Left ventricle myocardium superior (tissue), 1 donor: ENCODE measurements at regions of chr22 and their contacts with region 1.

Region 1: DNA sequence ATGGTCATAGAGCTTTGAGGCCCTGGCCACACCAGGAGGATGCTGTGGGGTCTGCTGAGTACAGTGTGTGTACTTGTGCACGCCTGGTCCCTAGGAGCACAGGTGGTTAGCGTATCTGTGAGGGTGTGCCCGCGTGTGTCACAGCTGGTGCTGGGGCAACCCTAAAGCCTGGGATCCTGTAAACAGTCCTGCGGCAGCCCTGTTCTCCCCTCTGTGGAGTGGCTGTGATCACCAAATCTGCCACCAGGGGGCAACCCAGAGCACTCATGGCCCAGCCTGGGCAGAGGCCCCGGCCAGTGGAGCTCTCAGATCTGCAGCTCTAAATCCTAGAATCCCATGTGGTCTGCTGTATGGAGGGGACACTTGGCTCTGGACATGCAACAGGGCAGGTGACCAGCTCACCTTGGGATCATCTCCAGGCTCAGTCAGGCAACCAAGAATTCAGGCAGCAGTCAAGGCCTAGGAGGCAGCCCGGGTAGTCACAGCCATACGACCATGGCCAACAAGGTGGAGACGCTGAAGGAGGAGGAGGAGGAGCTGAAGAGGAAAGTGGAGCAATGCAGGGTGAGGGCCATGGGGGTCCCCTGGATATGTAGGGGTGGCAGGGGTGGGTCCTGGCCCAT is 3.9 kb downstream of the SH3BP1 start:
- DNase-seq: peak; percentile 93
- ATAC-seq: peak; percentile 83

Region 2: GRCh38 chr22:37345863-37346504 is 297.4 kb before region 1 on chr22:
- intact Hi-C with region 1: no loop called
- DNase-seq: peak; percentile 49
- ATAC-seq: peak; percentile 72

Region 3: GRCh38 chr22:37696657-37697537 is 53.6 kb after region 1 on chr22 and contains the start of gene TRIOBP:
- intact Hi-C with region 1: loop called (anchors 10 kb)
- DNase-seq: peak; percentile 96
- ATAC-seq: peak; percentile 99
- total RNA-seq, gene TRIOBP: 82.7 TPM

Region 4: DNA sequence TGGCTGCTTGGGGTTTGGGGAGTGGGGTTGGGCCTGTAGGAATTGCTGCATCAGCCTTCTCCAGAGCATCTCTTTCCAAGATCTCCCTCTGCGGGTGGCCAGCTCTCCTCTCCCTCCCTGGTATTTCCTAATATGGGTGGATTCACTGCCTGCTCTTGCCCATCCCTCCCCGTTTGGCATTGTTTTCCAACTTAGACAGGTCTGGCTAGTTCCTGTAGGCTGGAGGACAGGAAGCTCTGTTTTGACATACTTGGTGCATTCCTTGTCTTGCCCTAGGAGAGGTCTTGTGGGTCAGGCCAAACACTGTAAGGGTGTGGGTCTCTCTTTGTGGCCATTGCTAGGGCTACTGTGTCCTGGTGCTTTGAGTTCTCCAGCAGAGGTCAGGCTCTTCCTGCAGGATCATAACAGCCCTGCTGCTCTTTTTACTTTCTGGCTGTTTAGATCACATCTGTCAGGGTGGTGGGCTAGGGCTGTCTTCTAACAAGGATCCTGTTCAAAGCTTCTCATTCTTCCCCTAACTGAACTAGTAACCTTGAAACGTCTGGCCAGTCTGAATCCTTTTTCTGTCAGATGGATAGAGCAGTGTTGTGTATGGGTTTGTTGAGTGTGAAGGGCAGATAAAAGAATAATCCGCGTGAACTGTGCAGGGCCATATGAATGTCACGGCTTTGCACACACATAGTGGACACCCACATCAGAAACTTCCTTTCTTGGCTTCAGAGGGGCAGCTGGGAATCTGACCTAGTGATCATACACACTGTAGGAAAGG is 244.5 kb after region 1 on chr22:
- intact Hi-C with region 1: no loop called
- DNase-seq: no peak
- ATAC-seq: peak; percentile 59